Calu3 (cell line): ENCODE measurements at regions of chr7 and their contacts with region 1.

Region 1: DNA sequence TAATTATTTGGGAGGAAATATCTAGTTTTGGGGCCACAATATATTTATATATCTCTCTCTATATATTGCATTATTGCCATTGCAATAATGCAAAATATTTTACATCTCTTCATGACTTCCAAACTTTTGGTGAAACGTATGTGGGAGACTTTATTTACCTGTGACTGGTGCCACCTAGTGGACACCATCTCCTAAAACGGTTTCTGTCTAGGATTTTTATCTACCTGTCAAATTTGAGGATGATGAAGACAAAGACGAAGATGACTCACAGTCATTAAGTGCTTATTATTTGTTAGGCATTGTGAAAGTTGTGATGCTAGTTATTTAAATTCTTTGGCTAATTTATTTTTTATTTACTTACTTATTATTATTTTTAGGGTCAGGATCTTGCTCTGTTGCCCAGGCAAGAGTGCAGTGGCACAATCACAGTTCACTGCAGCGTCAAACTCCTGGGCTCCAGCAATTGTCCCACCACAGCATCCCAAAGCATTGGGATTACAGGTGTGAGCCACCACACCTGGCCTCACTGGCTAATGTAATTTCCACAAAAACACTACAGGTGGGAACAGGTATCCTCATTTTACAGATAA is 18.7 kb upstream of the CBLL1 start:
- DNase-seq: peak; percentile 44
- H3K4me3 Mint-ChIP-seq: no peak overlapping the region
- H3K27ac Mint-ChIP-seq: no peak overlapping the region
- H3K4me1 Mint-ChIP-seq: no peaks in the 10 kb centered on the region
- H3K27me3 Mint-ChIP-seq: peaks cover 33% of the 10 kb centered on the region
- CTCF ChIP-seq: peak; percentile 22

Region 2: DNA sequence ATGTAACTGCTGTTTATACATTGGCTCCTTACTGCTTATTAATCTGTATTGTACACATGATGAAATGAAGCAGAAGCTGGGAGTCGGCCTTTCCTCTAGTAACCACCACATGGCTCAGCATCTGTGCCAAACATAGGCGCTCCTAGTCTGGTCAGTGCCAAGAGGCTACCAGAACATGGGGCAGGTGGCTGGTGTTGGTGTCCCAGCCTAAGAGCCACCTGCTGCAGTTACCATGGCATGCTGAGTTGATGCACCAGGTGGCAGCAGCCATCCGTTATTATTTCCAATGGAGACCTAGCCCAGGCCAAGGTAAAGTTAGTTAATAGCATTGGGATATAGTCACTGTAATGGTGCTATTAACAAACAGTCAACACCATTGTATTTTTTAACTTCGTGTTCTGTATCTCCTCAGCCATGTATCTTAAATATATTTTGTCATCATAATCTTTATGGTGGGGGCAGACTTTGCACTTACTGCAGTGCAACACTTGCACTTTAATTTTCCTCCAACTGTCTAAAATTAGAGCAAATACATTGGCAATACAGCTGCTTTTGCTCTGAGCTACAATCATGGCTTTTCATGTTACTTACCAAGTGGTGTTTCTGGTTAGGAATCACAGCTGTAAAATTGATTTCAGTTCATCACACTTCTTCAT is 523.3 kb before region 1 on chr7:
- CTCF ChIA-PET with region 1: no interaction called
- intact Hi-C with region 1: loop called (anchors 2 kb)
- DNase-seq: peak; percentile 41
- H3K4me3 Mint-ChIP-seq: no peak overlapping the region
- H3K27ac Mint-ChIP-seq: no peak overlapping the region
- H3K4me1 Mint-ChIP-seq: no peaks in the 10 kb centered on the region
- H3K27me3 Mint-ChIP-seq: no peaks in the 10 kb centered on the region
- CTCF ChIP-seq: no peak

Region 3: DNA sequence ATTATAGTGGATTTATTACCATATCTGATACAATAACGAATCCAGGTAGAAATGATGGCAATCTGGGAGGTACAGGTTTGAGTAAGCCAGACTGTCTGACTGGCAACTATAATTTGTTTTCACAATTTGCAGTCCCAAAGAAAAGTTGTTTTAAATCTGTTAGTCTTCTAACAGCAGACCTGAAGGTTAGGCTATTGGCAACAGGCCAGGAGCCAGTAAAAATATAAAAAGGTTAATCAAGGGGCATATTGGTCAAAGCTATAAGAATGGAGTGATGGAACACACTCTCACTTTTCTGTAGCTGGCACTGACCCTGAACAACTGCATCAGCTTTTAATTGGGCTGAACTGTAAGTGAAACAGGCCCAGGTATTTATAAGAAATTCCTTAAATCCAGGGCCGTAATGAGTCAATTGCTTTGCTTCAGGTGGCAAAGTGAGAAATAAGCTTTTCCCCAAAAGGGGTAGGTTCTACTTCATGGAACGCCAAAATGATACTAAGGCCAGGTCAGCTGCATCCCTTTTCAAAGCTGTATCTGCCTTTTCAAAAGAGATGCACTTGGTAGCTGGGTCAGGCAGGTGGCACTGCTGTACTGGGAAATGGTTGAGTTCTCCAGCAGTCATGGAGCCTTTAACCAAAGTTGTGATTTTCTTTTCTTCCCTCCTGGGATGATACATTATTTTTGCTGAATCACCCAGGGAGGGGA is 262.4 kb before region 1 on chr7:
- CTCF ChIA-PET with region 1: interaction called, 5 read pairs
- intact Hi-C with region 1: loop called (anchors 1 kb)
- DNase-seq: peak; percentile 37
- H3K4me3 Mint-ChIP-seq: no peak overlapping the region
- H3K27ac Mint-ChIP-seq: no peak overlapping the region
- H3K4me1 Mint-ChIP-seq: no peaks in the 10 kb centered on the region
- H3K27me3 Mint-ChIP-seq: no peaks in the 10 kb centered on the region
- CTCF ChIP-seq: peak; percentile 25

Region 4: DNA sequence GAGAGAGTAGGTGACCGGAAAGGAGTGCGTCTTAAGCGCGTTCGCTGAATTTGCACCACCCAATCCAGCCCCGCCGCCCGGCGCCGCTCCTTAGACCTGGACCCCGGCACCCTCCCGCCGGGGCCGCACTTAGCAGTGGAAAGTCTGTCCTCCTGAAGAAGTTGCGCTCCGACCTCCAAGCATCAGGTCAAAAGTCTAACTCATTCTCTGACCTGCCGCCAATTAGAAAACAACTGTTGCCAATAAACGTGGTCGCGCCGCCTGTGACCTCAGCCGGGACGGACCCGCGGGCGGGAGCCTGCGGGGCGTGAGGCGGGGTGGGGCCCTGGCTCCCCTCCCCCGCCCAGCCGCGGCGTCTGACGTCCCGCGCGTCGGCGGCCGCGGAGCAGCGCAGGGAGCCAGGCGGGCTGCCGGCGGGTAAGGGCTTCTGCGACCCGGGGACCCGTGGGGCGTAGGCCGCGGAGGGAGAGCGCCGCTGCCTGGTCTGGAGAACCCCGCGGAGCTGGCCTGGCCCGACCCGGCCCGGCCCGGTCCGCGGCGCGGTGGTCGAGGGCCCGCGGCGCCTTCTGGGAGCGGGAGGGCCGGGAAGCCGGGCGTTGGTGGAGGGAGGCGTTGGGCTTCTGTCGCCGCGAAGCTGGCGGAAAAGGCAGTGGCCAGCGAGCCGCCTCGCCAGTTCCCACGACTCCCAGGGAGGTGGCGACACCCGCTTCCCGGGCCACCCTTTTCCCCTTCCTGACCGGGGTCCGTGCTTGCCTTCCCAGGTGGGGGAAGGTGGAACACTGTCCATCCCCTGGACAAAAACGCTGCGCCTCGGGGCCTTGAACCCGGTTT is 145.1 kb before region 1 on chr7 and contains the start of gene BCAP29:
- CTCF ChIA-PET with region 1: no interaction called
- intact Hi-C with region 1: loop called (anchors 10 kb)
- DNase-seq: peak; percentile 67
- H3K4me3 Mint-ChIP-seq: peak within 1 kb of the TSS; percentile 70
- H3K27ac Mint-ChIP-seq: peak within 1 kb of the TSS; percentile 56
- H3K4me1 Mint-ChIP-seq: no peaks in the 10 kb centered on the region
- H3K27me3 Mint-ChIP-seq: no peaks in the 10 kb centered on the region
- CTCF ChIP-seq: no peak
- total RNA-seq, gene BCAP29: 16.5 and 17.6 TPM in 2 replicates

Region 5: DNA sequence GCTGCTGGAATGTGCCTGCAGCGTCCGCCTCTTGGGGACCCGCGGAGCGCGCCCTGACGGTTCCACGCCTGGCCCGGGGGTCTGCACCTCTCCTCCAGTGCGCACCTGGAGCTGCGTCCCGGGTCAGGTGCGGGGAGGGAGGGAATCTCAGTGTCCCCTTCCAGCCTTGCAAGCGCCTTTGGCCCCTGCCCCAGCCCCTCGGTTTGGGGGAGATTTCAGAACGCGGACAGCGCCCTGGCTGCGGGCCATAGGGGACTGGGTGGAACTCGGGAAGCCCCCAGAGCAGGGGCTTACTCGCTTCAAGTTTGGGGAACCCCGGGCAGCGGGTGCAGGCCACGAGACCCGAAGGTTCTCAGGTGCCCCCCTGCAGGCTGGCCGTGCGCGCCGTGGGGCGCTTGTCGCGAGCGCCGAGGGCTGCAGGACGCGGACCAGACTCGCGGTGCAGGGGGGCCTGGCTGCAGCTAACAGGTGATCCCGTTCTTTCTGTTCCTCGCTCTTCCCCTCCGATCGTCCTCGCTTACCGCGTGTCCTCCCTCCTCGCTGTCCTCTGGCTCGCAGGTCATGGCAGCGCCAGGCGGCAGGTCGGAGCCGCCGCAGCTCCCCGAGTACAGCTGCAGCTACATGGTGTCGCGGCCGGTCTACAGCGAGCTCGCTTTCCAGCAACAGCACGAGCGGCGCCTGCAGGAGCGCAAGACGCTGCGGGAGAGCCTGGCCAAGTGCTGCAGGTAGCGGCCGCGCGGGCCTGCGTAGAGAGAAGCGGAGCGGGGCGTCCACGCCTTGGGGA is 64.0 kb before region 1 on chr7:
- CTCF ChIA-PET with region 1: no interaction called
- intact Hi-C with region 1: no loop called
- DNase-seq: peak; percentile 55
- H3K4me3 Mint-ChIP-seq: peak overlapping the region; percentile 80
- H3K27ac Mint-ChIP-seq: no peak overlapping the region
- H3K4me1 Mint-ChIP-seq: no peaks in the 10 kb centered on the region
- H3K27me3 Mint-ChIP-seq: peaks cover 27% of the 10 kb centered on the region
- CTCF ChIP-seq: no peak